ENCODE measurements at regions of chr4 and their contacts with region 1.

Region 1: GRCh38 chr4:8306501-8307021 is 37.0 kb downstream of the HTRA3 start:
- DNase-seq: no peak
- ATAC-seq: no peak

Region 2: DNA sequence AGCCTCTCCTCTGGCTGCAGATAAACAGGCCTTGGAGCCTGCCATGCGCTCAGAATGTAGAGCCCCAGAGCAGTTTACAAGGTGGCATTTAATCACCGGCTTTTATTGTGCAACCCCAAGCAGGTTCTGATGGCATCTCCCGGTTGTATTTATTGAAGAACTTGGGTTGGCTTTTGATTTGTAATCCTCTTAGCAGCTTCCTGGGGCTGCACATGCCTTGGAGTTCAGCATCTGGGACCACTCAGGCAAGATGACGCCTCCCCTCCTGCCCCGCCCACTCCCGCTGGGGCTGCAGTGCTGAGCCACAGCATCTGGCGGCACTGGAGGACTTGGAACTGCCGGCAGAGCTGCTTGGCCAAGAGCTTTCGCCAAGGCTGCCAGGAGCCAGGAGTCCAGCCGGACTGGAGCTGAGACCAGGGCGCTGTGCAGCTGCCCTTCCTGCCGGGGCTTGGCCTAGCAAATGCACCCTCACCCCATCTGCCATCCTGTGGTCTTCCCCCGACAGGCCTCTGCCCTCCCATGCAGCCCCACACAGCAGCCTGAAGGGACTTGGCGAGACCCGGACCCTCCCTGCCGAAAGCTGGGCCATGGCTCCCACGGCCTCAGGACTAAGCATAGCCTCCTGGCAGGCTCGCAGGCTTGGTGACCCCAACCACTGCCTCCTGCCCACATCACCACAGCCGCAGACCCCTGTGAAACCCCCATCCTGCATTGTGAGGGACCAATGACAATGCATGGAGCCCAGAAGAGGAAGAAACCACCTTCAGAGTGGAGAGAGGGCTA is 31.6 kb before region 1 on chr4:
- intact Hi-C with region 1: loop called (anchors 2 kb)
- DNase-seq: peak; percentile 93
- ATAC-seq: peak; percentile 80